Activated naive CD8-positive, alpha-beta T cell treated with anti-CD3 and anti-CD28 coated beads, Interleukin-2, amount 10 ng/mL, durations not matched to agents 7 days and 5 days (primary cell): ENCODE measurements at regions of chr9 and their contacts with region 1.

Region 1: GRCh38 chr9:35732122-35732799 is at the starts of genes CREB3 and TLN1:
- DNase-seq: peak; percentile 95
- ATAC-seq: peak; percentile 91
- H3K4me3 Mint-ChIP-seq: no peak within 1 kb of the TSS
- H3K27ac Mint-ChIP-seq: peak within 1 kb of the TSS; percentile 92
- H3K4me1 Mint-ChIP-seq: peaks cover 14% of the 10 kb centered on the region
- H3K27me3 Mint-ChIP-seq: no peaks in the 10 kb centered on the region
- total RNA-seq, gene CREB3: 21.1 to 24.1 TPM
- total RNA-seq, gene TLN1: 381 to 388 TPM

Region 2: GRCh38 chr9:35657546-35658136 is 74.6 kb before region 1 on chr9 and contains the start of gene RMRP:
- POLR2A ChIA-PET with region 1: interaction called, 30 read pairs
- DNase-seq: peak; percentile 84
- ATAC-seq: peak; percentile 90
- H3K4me3 Mint-ChIP-seq: peak within 1 kb of the TSS; percentile 92
- H3K27ac Mint-ChIP-seq: peak within 1 kb of the TSS; percentile 98
- H3K4me1 Mint-ChIP-seq: peaks cover 57% of the 10 kb centered on the region
- H3K27me3 Mint-ChIP-seq: no peaks in the 10 kb centered on the region
- total RNA-seq, gene RMRP: 10,447 to 10,452 TPM

Region 3: GRCh38 chr9:35664531-35665470 is 67.5 kb before region 1 on chr9 and contains the start of gene ARHGEF39:
- POLR2A ChIA-PET with region 1: interaction called, 30 read pairs
- DNase-seq: peak; percentile 87
- ATAC-seq: peak; percentile 87
- H3K4me3 Mint-ChIP-seq: peak within 1 kb of the TSS; percentile 91
- H3K27ac Mint-ChIP-seq: peak within 1 kb of the TSS; percentile 87
- H3K4me1 Mint-ChIP-seq: peaks cover 53% of the 10 kb centered on the region
- H3K27me3 Mint-ChIP-seq: no peaks in the 10 kb centered on the region
- total RNA-seq, gene ARHGEF39: 13.1 to 13.4 TPM

Region 4: DNA sequence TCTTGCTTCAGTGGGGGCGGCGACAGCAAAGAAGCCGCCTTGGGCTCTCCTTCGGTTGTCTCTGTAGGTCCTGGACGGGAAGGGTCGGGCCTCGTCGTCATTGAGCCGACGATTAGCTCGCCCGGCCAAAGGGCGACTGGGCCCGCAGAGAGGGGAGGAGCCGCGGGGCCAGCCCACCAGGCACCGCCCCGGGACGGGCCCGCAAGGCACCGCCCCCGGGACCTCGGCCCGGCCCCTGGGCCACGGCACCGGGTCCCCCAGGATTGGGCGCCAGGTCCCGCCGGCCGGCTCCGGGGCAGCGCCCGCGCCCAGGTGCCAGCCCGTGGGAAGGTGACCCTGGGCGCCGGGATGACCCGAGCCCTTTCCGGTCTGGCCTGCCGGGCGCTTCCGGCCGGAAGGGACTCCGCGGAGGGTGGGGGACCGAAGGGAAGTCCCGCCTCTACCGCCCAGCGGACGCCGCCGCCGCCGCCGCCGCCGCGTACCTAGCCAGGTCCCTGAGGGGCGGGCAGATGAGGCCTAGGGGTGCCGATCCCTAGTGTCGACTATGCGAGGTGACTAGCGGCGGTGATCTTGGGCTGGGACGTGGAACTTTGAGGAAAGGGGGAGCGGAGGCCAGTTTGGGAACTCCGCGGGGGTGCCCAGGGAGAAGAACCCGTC is 16.7 kb after region 1 on chr9 and contains the starts of genes GBA2 and RGP1:
- POLR2A ChIA-PET with region 1: interaction called, 53 read pairs
- DNase-seq: peak; percentile 86
- ATAC-seq: peak; percentile 81
- H3K4me3 Mint-ChIP-seq: peak within 1 kb of the TSS; percentile 94
- H3K27ac Mint-ChIP-seq: peak within 1 kb of the TSS; percentile 91
- H3K4me1 Mint-ChIP-seq: peaks cover 32% of the 10 kb centered on the region
- H3K27me3 Mint-ChIP-seq: no peaks in the 10 kb centered on the region
- total RNA-seq, gene GBA2: 60.1 to 62.2 TPM
- total RNA-seq, gene RGP1: 26.9 to 29.1 TPM

Region 5: DNA sequence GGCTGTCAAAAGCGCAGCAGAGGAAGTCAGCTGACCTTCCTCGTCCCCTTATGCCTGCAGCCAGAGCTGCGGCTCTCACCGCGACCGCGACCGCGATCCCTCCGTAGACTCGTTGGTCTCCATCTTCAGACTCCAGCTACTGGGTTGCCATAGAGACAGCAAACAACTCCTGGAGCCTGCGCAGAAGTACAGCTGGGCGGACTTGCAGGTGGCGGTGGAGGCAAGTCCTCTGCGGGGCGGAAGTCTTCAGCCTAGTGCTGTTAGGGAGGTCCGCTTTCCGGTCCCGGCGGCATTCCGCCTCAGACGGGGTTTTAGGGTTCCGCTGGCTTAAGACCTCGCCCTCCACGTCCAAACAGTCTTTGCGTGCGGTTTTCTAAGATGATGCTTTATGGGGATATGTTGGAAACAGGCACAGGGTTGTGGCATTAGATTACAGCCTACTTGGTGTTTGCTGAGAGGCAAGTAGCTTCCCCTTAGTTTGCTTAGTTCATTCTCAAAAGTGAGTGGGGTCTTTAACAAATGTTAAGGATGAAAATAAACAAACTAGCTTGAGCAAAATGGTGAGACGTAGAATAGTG is 79.9 kb after region 1 on chr9 and contains the start of gene SPAG8:
- POLR2A ChIA-PET with region 1: interaction called, 10 read pairs
- DNase-seq: peak; percentile 97
- ATAC-seq: peak; percentile 71
- H3K4me3 Mint-ChIP-seq: peak within 1 kb of the TSS; percentile 76
- H3K27ac Mint-ChIP-seq: peak within 1 kb of the TSS; percentile 89
- H3K4me1 Mint-ChIP-seq: peaks cover 32% of the 10 kb centered on the region
- H3K27me3 Mint-ChIP-seq: peaks cover 1% of the 10 kb centered on the region
- total RNA-seq, gene SPAG8: 3.4 to 4.6 TPM